ENCODE measurements at regions of chr12 and their contacts with region 1.

Region 1: GRCh38 chr12:10613349-10614055 is at the start of gene MAGOHB:
- DNase-seq: peak; percentile 99
- total RNA-seq, gene MAGOHB: 19.3 to 21.2 TPM

Region 2: DNA sequence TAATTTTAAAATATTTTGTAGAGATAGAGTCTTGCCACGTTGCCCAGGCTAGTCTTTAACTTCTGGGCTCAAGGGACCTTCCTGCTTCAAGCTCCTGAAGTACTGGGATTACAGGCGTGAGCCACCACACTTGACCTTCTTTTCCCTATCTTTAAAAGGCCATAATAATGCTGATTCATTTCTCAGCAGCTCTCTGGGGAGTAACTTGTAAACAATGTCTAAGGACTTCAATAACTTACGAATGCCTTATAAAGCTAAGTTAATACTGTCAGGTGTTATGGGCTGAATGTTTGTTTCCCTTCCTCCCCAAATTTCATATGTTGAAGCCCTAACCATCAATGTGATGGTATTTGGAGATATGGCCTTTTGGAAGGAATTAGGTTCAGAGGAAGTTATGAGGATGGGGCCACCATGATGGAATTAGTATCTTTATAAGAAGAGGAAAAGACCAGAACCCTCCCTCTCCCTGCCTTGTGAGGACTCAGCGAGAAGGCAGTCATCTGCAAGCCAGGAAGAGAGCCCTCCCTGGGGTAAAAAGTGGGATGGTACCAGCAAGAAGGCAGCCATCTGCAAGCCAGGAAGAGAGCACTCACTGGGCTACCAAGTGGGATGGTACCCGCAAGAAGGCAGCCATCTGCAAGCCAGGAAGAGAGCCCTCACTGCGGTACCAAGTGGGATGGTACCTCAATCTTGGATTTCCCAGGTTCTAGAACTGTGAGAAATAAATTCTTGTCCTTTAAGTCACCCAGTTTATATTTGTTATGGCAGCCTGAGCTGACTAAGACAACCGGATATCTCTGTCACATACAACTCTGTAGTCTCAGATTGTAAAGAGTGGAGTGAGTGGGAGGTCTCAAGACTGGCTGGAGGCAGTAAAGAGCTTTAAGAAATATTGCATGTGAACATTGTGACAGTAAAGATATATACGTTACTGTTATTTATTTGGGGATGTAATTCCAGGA is 125.9 kb after region 1 on chr12:
- intact Hi-C with region 1: loop called in 1 of 2 experiments (anchors 10 kb)
- DNase-seq: no peak